Heart left ventricle (tissue), 16 donors: ENCODE measurements at regions of chr7 and their contacts with region 1.

Region 1: GRCh38 chr7:119452401-119452800 is 820.6 kb upstream of the KCND2 start:
- DNase-seq: no peak
- ATAC-seq: no peak
- H3K4me3 ChIP-seq: no peak overlapping the region
- H3K27ac ChIP-seq: no peak overlapping the region
- H3K4me1 ChIP-seq: no peaks in the 10 kb centered on the region
- H3K27me3 ChIP-seq: no peaks in the 10 kb centered on the region
- CTCF ChIP-seq: no peak
- POLR2A ChIP-seq: no peak

Region 2: DNA sequence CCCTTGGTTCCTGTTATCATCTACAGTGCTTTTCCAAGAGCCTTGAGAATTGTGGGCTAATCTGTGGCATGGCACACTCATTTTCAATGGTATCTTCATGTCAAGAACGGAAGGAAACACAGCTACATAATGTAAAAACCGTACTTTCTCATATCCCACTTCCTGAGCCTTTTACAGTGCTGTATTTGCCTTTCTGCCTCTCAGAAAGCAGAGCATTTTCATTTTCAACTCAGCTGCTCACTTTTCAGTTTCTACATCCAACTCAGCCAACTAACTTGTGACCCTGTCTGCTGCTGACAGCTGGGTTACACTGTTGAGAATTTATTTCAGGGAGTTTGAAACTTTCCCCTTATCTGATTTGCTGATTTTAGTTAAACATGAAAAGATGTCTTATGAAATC is 55.2 kb before region 1 on chr7:
- intact Hi-C with region 1: loop called in 1 of 10 experiments (anchors 10 kb)
- DNase-seq: no peak
- ATAC-seq: no peak
- H3K4me3 ChIP-seq: no peak overlapping the region
- H3K27ac ChIP-seq: no peak overlapping the region
- H3K4me1 ChIP-seq: no peaks in the 10 kb centered on the region
- H3K27me3 ChIP-seq: no peaks in the 10 kb centered on the region
- CTCF ChIP-seq: no peak
- POLR2A ChIP-seq: no peak

Region 3: DNA sequence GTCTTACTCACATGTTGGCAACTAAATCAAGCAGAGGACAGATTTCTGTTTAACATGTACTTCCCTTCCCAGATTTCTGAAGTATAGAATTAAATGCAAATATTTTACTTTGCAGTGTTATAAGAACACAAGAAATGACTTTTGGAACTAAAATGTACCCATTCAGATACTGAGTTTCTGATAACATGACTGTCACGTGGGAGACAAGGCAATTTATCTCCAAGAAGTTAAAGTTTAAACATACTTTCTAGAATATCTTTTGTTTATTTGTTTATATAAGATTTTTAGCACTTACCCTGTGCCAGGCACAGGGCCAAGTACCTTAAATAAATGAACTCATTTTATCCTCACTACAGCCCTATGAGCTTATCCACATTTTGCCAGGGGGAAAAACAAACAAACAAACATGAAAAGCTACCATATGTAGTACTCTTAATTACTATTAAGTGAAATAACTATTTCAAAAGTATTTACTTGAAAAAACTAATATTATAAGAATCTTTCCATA is 13.5 kb after region 1 on chr7:
- intact Hi-C with region 1: no loop called
- DNase-seq: no peak
- ATAC-seq: no peak
- H3K4me3 ChIP-seq: no peak overlapping the region
- H3K27ac ChIP-seq: no peak overlapping the region
- H3K4me1 ChIP-seq: no peaks in the 10 kb centered on the region
- H3K27me3 ChIP-seq: no peaks in the 10 kb centered on the region
- CTCF ChIP-seq: no peak
- POLR2A ChIP-seq: no peak